ENCODE measurements at regions of chr16 and their contacts with region 1.

Region 1: GRCh38 chr16:3282730-3283524 is at the start of gene ZNF263:
- DNase-seq: peak; percentile 87 to 98
- H3K4me3 ChIP-seq: peak within 1 kb of the TSS; percentile 92 to 96
- H3K27ac ChIP-seq: peak within 1 kb of the TSS; percentile 95 to 100
- H3K4me1 ChIP-seq: peaks cover 12 to 13% of the 10 kb centered on the region in 2 donors
- H3K27me3 ChIP-seq: no peaks in the 10 kb centered on the region
- CTCF ChIP-seq: no peak
- total RNA-seq, gene ZNF263: 61.8 TPM

Region 2: DNA sequence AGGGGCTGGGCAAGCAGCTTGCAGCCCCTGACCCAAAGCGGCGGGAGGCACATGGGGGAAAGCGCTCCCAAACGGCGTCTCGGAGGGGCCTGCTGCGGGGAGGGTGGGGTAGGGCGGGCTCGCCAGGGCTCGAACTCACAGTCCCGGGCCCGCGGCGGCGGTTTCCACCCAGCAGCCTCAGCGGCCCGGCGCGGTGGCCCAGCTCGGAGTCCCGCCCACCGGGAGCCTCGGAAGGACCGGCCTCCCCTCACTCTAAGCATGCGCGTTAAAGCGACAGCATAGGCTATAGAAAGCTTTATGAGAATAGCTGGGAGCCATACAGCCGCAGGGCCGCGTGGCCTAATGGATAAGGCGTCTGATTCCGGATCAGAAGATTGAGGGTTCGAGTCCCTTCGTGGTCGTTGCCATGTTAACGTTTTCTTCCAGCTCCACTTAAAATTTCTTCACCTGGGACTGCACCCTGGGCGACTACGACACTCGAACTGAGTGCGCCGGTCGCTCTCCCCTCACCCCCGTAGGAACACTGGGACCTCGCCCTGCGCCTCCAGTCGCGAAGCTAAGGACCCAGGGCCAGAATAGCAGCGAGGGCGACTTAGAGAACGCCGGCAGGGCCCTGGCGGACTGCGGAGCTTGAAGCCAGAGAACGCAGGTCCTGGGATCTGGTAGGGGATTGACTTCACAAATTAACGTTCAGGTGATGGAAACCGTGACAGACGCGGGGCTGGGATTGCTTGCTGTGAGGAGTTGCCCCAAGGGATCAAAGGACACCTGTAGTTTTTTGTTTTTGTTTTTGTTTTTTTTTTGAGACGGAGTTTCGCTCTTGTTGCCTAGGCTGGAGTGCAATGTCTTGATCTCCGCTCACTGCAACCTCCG is 132.3 kb before region 1 on chr16:
- intact Hi-C with region 1: loop called (anchors 2 kb)
- DNase-seq: peak; percentile 89 to 98
- H3K4me3 ChIP-seq: peak overlapping the region; percentile 76
- H3K27ac ChIP-seq: peak overlapping the region; percentile 82 to 86
- H3K4me1 ChIP-seq: peaks cover 0 to 15% of the 10 kb centered on the region in 2 donors
- H3K27me3 ChIP-seq: no peaks in the 10 kb centered on the region
- CTCF ChIP-seq: no peak

Region 3: GRCh38 chr16:3234543-3235541 is 48.1 kb before region 1 on chr16 and contains the start of gene ZNF200:
- intact Hi-C with region 1: loop called (anchors 1 kb)
- DNase-seq: peak; percentile 79 to 97
- H3K4me3 ChIP-seq: peak within 1 kb of the TSS; percentile 84 to 97
- H3K27ac ChIP-seq: peak within 1 kb of the TSS; percentile 94 to 97
- H3K4me1 ChIP-seq: peaks cover 0 to 8% of the 10 kb centered on the region in 2 donors
- H3K27me3 ChIP-seq: no peaks in the 10 kb centered on the region
- CTCF ChIP-seq: no peak
- total RNA-seq, gene ZNF200: 14.6 TPM

Region 4: GRCh38 chr16:3264137-3265036 is 18.5 kb before region 1 on chr16:
- intact Hi-C with region 1: loop called (anchors 1 kb)
- DNase-seq: peak; percentile 90 to 98
- H3K4me3 ChIP-seq: peak overlapping the region; percentile 56 to 66
- H3K27ac ChIP-seq: peak overlapping the region; percentile 89 to 94
- H3K4me1 ChIP-seq: peaks cover 0 to 10% of the 10 kb centered on the region in 2 donors
- H3K27me3 ChIP-seq: no peaks in the 10 kb centered on the region
- CTCF ChIP-seq: peak in 1 of 3 experiments; percentile 33

Region 5: DNA sequence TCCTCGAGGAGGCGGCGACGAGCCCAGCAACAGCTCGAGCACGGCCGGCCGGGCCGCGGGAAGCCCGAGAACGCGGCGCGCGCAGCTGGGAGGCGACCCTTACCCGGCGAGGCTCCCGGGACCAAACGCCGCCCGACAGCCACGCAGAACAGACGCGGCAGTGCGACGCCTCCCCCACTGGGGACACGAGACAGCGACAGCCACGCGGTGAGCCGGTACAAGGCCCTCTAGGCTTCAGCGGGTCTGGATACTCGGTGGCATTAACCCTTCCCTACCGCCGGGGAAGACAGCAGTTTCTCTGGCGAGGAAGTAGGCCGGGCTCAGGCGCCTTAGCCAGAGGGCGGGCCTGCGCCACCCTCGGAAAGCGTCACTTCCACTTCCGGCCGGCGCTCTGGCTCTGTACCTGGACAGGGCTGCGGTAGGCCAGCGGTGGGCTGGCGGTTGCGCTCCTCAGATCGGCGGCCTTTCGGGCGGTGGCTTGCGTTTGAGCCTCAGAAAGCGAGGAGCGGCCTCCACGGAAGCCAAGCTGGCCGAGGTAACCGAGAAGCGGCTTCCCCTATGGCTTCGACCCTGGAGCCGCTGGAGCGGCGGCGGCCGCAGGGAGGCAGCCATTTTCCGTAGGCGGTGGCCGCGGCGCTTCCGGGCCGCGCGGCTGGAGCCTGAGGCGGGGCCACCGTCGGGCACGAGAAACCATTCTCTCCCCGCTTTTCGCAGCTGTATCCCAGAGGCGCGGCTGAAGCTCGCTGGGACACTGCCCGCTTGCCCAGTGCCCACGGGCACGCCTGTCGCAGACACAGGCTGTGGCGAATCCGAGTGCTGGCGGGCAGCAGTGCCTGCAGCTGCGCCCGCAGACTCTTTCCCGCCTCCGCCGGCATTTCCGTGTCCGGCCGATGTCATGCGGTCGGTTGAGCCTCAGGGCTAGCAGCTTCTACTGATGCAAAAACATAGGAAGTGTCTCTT is 22.5 kb after region 1 on chr16 and contains the starts of genes TIGD7 and ZNF75A:
- intact Hi-C with region 1: loop called (anchors 1 kb)
- DNase-seq: peak in 1 of 2 donors; percentile 92
- H3K4me3 ChIP-seq: peak within 1 kb of the TSS; percentile 67 to 88
- H3K27ac ChIP-seq: peak within 1 kb of the TSS; percentile 93
- H3K4me1 ChIP-seq: peaks cover 0 to 7% of the 10 kb centered on the region in 2 donors
- H3K27me3 ChIP-seq: no peaks in the 10 kb centered on the region
- CTCF ChIP-seq: peak in 2 of 3 experiments; percentile 22 to 39
- total RNA-seq, gene TIGD7: 1.6 TPM
- total RNA-seq, gene ZNF75A: 8.3 TPM

Region 6: GRCh38 chr16:3443108-3444031 is 160.4 kb after region 1 on chr16 and contains the starts of genes NAA60 and ZNF597:
- intact Hi-C with region 1: loop called (anchors 5 kb)
- DNase-seq: peak; percentile 38 to 90
- H3K4me3 ChIP-seq: peak within 1 kb of the TSS; percentile 53 to 83
- H3K27ac ChIP-seq: peak within 1 kb of the TSS; percentile 75 to 79
- H3K4me1 ChIP-seq: no peaks in the 10 kb centered on the region
- H3K27me3 ChIP-seq: no peaks in the 10 kb centered on the region
- CTCF ChIP-seq: no peak
- total RNA-seq, gene NAA60: 74.6 TPM
- total RNA-seq, gene ZNF597: 0.21 TPM

Region 7: GRCh38 chr16:3457434-3458252 is 174.7 kb after region 1 on chr16:
- intact Hi-C with region 1: loop called (anchors 1 kb)
- DNase-seq: peak; percentile 33 to 90
- H3K4me3 ChIP-seq: peak overlapping the region; percentile 72 to 73
- H3K27ac ChIP-seq: peak overlapping the region; percentile 92
- H3K4me1 ChIP-seq: peaks cover 8 to 17% of the 10 kb centered on the region in 2 donors
- H3K27me3 ChIP-seq: no peaks in the 10 kb centered on the region
- CTCF ChIP-seq: peak; percentile 38 to 48 (median 44)

Region 8: GRCh38 chr16:3530371-3530914 is 247.5 kb after region 1 on chr16:
- intact Hi-C with region 1: no loop called
- DNase-seq: no peak
- H3K4me3 ChIP-seq: no peak overlapping the region
- H3K27ac ChIP-seq: no peak overlapping the region
- H3K4me1 ChIP-seq: peaks cover 0 to 2% of the 10 kb centered on the region in 2 donors
- H3K27me3 ChIP-seq: no peaks in the 10 kb centered on the region
- CTCF ChIP-seq: no peak

Measured in ascending aorta (tissue), 2 donors.